Activated CD4-positive, alpha-beta memory T cell treated with anti-CD3 and anti-CD28 coated beads for 36 hours (primary cell): ENCODE measurements at regions of chr2 and their contacts with region 1.

Region 1: DNA sequence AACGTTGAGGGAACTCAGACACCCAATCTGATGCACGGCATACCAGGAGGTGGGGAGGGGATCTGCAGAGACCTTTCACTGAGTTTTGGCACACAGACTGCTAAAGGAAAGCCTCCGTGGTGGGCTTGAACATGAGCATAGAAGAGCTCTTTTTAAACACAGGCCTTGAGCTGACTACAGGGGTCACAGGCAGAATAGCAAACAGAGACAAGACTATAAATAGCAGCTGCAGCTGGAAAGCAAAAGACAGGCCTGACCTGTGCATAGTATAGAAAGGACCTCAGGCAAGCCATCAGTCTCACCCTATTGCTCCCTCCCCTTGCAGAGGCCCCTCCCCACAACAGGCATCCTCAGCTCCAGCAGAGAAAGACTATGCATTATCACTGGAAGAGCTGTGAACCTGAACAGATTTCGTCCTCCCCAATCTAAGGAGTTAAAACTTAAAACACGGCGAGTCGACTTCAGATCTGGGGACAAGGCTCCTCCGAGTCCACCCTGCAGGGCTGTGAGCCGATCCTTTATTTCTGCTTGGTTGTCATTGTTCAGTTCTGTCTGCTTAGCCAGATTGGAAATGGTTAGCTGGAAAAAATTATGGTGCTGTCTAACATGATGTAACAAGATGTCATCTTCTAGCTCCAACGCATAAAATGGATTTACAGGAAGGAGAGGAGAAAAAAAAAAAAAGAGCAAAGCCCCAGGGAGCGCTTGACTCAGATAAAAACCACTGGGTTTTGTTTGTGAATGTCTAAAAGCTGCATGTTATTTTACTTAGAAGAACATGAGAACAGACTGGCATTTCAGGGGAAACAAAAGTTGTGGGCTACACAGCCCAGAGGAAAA is 25.2 kb upstream of the LCLAT1 start:
- DNase-seq: peak; percentile 44
- H3K4me3 Mint-ChIP-seq: peak overlapping the region; percentile 69
- H3K27ac Mint-ChIP-seq: peak overlapping the region; percentile 91
- H3K4me1 Mint-ChIP-seq: peaks cover 41% of the 10 kb centered on the region
- H3K27me3 Mint-ChIP-seq: no peaks in the 10 kb centered on the region

Region 2: GRCh38 chr2:29115797-29116781 is 1305.7 kb before region 1 on chr2:
- CTCF ChIA-PET with region 1: no interaction called
- POLR2A ChIA-PET with region 1: no interaction called
- intact Hi-C with region 1: loop called (anchors 10 kb)
- DNase-seq: peak; percentile 85
- H3K4me3 Mint-ChIP-seq: peak overlapping the region; percentile 88
- H3K27ac Mint-ChIP-seq: peak overlapping the region; percentile 93
- H3K4me1 Mint-ChIP-seq: peaks cover 58% of the 10 kb centered on the region
- H3K27me3 Mint-ChIP-seq: no peaks in the 10 kb centered on the region

Region 3: GRCh38 chr2:30305235-30305634 is 116.6 kb before region 1 on chr2:
- CTCF ChIA-PET with region 1: no interaction called
- POLR2A ChIA-PET with region 1: interaction called, 3 read pairs
- intact Hi-C with region 1: loop called (anchors 1 kb)
- DNase-seq: peak; percentile 23
- H3K4me3 Mint-ChIP-seq: no peak overlapping the region
- H3K27ac Mint-ChIP-seq: peak overlapping the region; percentile 73
- H3K4me1 Mint-ChIP-seq: peaks cover 24% of the 10 kb centered on the region
- H3K27me3 Mint-ChIP-seq: no peaks in the 10 kb centered on the region

Region 4: GRCh38 chr2:30373881-30374302 is 47.9 kb before region 1 on chr2:
- CTCF ChIA-PET with region 1: no interaction called
- POLR2A ChIA-PET with region 1: interaction called, 4 read pairs
- intact Hi-C with region 1: loop called (anchors 5 kb)
- DNase-seq: peak; percentile 19
- H3K4me3 Mint-ChIP-seq: no peak overlapping the region
- H3K27ac Mint-ChIP-seq: peak overlapping the region; percentile 25
- H3K4me1 Mint-ChIP-seq: peaks cover 29% of the 10 kb centered on the region
- H3K27me3 Mint-ChIP-seq: no peaks in the 10 kb centered on the region

Region 5: DNA sequence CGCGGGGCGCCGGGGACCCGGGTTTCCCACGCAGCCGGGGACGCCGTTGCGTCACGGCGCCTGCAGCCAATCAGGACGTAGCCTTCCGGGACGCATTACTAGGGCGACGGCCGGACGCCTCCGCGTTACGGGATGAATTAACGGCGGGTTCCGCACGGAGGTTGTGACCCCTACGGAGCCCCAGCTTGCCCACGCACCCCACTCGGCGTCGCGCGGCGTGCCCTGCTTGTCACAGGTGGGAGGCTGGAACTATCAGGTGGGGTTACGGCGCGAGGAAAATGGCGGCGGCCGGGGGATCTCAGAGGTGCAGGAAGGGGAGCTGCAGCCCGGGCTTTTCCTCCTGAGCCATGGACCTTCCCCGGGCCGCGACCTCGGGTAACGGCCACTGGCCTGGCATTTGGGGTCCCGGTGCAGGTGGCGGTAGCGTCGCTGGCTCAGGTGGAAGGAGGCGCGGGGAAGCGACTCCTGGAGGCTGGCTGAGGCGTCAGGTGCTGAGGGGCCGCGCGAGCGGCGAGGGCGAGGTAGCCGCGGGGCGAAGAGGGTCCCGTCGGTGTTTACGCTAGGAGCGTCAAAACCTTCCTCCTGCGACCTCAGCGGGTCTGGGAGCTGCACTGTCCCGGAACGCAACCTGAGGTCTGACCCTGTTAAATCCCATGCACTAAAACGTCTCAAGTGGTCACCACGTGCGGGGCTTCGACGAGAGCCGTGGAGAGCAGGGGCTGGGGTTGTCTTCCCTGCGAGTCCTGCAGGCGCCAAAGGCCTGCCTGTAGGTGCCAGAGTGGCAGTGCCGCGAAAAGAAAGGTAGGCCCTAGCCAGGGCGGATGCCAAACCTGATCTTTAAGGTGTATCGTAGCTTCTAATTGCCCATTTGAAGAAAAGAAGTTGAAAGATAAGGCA is 25.6 kb after region 1 on chr2 and contains the start of gene LCLAT1:
- CTCF ChIA-PET with region 1: interaction called, 4 read pairs
- POLR2A ChIA-PET with region 1: interaction called, 29 read pairs
- intact Hi-C with region 1: loop called (anchors 1 kb)
- DNase-seq: peak; percentile 90
- H3K4me3 Mint-ChIP-seq: peak within 1 kb of the TSS; percentile 88
- H3K27ac Mint-ChIP-seq: peak within 1 kb of the TSS; percentile 95
- H3K4me1 Mint-ChIP-seq: peaks cover 24% of the 10 kb centered on the region
- H3K27me3 Mint-ChIP-seq: no peaks in the 10 kb centered on the region
- total RNA-seq, gene LCLAT1: 21.5 to 24.3 TPM